Left cardiac atrium (tissue), 4 donors: ENCODE measurements at regions of chr18 and their contacts with region 1.

Region 1: DNA sequence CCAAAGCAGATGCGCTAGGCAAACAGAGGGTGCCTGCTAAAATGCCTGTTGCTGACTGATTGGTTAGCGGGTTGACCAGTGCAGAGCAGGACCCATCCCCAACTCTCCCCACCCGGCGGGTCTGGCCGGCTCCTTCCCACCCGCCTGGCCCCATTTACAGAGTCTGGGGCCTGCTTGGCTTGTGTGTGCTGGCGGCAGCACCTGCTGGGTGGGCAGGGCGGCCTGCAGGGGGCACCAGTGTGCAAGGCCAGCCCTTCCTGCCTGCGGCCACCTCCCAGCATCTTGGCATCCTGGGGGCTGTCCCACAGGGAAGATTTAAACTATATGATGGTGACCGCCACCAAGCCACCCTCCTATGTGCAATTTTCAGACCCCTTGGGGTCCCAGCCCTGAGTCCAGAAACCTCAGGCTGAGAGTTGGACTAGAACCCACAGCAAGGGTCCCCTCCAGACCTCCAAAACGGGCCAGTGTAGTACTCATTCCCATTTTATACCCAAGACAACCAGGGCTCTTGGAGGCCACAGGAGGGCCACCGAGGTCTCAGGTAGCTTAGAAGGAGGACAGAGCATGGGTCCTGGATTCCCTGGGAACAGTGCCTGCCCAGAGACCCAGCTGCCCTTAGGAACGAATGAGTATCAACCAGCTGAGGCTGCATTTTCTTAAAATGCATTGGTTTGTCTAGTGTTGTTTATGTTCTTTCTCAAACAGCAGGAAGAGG is 173.6 kb downstream of the SMAD7 start:
- DNase-seq: peak; percentile 70
- ATAC-seq: peak in 1 of 2 donors; percentile 14

Region 2: GRCh38 chr18:48475635-48476549 is 301.3 kb before region 1 on chr18:
- intact Hi-C with region 1: no loop called
- DNase-seq: peak; percentile 36
- ATAC-seq: peak; percentile 87 to 94

Region 3: DNA sequence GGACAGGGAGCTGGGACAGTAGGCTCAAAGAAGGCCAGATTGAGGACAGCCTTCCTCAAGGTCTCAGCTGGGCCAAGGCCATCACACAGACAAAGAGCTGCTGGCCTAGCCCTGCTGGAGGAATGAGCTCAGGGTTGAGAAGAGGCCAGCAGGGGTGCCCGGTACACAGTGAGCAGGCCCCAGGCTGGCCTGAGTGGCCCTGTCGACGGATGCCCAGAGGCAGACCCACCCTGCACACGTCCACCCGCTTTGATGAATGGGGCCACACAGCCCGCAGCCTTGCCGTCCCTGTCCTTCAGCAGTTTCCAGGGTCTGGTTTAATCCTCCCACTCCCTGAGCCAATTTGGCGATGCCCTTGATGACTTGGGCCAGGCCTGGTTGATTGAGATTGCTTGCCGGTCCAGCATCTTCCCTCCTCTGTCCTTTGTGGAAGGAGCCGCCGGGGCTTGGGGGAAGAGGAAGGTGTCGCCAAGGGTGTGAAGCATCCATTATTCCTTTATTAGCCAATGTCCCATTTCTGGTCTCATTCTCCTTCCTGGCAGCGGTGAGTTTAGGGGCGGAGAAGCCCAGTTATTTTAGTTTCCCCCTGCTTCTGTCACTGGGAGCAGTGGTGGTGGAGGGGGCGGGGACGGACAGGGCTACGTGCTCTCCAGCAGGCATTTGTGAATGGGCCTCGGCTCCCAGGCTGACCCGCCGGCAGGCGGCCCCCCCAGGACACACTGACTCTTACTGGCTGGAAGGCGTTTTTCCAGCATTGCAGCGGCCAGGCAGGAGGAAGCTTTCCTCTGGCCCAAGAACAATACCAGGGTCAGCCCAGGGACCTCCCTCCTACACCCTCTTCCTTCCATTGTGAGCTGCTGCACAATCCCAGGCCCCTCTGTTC is 96.6 kb before region 1 on chr18:
- intact Hi-C with region 1: loop called in 1 of 2 experiments (anchors 10 kb)
- DNase-seq: peak; percentile 94
- ATAC-seq: peak; percentile 91

Region 4: DNA sequence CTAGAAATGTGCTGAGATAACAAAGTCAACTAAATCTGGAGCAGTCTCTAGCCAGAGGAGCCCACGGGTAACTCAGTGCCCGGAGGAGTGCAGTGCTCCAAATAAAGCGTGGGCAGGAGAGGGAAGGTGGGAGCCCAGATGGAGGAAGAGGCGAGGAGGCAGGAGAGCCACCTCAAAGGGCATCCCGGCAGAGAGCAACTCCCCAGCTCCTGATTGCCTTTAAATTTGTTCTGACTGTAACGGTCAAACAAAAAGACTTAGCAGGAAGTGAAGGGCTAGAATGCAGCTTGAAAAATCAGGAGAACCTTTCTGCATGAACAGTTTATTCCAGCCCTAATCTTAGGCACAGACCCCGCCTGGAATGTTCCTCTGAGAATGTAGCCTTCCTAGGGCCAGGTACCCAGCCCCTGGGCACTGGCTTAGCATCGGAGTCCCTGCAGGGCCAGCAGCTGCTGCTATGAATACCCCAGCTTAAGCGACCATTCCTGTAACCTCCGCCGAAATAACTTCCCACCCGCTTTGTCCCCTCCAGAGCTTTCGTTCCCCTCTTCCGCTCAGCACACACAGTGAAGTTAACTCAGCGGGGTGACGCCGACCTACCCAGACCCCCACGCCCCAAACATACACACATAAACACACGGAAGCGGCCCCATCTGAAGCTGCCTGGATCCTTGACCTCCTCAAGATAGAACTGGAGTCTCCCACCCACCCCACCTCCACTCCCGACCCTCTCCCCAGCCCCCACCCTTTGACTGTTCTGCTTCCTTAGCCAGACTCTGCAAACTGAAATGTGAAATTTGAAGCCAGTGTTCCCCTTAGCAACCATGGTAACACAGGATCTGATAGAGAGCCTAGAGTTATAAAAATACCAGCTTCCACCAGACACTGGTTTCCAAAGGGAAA is 50.4 kb after region 1 on chr18:
- intact Hi-C with region 1: loop called in 1 of 2 experiments (anchors 5 kb)
- DNase-seq: no peak
- ATAC-seq: peak; percentile 72 to 75

Region 5: GRCh38 chr18:48946329-48946835 is 169.2 kb after region 1 on chr18:
- intact Hi-C with region 1: loop called (anchors 2 to 10 kb)
- DNase-seq: no peak
- ATAC-seq: no peak

Region 6: DNA sequence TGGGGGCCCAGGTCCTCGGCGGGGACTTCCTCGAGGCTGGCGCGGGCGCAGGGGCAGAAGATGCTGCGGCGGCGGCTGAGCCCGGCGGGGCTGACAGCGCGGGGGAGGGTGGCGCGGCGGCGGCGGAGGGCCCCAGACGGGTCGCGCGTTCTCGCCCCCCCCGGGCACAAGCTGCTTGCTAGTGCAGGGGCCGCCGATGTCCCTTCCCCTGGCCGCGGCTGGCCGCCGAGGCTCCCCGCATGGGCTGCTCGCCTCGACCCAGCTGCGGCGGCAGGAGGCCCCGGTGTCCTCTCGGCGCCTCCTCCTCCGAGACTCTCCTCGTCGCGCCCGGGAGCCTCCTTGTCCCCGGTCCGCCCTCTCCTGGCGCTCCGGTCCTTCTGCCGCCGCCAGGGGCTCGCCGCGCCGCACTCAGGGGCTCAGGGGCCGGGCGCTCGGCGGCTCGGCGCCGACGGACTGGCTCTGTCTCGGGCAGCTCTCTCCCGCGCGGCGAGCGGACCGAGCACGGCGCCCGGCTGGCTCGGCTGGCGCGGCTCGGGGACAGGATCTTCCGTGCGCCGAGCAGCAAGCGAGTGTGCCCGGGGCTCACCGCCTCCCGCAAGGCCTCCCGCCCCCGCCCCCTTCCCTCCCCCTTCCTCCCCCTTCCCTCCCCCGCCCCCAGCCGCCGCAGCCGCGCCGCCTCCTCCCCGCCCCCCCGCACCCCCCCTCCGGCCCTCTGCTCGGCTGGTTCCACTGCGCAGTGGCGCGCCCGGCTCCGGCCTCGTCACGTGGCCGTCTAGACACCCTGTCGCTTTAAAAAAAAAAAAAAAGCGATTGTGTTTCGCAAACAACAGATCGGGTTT is 174.5 kb after region 1 on chr18:
- intact Hi-C with region 1: loop called (anchors 2 to 10 kb)
- DNase-seq: peak; percentile 92
- ATAC-seq: peak; percentile 76 to 78

Region 7: GRCh38 chr18:48997985-48998831 is 221.0 kb after region 1 on chr18:
- intact Hi-C with region 1: loop called in 1 of 2 experiments (anchors 5 kb)
- DNase-seq: peak; percentile 82
- ATAC-seq: peak; percentile 74 to 82

Region 8: DNA sequence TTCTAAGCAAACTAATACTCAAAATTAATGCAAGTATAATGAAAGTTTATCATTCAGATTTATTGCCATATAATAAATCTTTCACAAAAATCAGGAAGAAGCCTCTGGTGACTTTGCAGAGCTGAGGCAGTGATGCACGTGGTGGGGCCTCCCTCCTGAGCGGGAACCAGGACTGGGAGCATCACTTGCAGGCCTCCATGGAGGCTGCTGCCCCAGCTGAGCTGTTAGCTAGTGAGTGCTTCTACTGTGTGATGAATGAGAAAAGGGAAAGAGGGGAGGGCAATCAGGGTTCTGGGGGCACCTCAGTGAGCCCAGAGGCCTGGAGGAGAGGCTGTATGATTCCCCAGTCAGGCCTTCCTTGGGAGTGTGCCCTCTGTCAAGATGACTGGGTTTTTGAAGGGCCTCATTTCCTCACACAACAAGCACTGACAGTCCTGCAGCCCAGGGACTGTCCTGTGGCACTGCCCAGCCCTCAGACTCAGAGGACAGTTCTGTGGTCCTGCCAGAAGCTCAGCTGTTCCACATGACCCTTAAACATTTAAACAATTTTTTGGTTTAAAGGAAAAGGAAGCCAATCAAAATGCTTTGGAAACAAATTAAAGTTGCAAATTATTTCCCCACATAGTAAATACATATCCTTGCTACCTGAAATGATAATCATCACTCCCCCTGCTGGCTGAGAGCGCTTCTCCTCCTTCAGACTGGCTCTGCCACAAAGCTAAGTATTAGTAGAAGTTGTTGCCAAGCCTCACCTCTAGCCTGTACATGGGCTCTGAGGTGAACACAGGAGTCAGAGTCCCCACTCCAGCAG is 264.5 kb after region 1 on chr18:
- intact Hi-C with region 1: loop called in 1 of 2 experiments (anchors 10 kb)
- DNase-seq: peak; percentile 51
- ATAC-seq: peak; percentile 73 to 78